Aorta (tissue), 5 donors: ENCODE measurements at regions of chr9 and their contacts with region 1.

Region 1: DNA sequence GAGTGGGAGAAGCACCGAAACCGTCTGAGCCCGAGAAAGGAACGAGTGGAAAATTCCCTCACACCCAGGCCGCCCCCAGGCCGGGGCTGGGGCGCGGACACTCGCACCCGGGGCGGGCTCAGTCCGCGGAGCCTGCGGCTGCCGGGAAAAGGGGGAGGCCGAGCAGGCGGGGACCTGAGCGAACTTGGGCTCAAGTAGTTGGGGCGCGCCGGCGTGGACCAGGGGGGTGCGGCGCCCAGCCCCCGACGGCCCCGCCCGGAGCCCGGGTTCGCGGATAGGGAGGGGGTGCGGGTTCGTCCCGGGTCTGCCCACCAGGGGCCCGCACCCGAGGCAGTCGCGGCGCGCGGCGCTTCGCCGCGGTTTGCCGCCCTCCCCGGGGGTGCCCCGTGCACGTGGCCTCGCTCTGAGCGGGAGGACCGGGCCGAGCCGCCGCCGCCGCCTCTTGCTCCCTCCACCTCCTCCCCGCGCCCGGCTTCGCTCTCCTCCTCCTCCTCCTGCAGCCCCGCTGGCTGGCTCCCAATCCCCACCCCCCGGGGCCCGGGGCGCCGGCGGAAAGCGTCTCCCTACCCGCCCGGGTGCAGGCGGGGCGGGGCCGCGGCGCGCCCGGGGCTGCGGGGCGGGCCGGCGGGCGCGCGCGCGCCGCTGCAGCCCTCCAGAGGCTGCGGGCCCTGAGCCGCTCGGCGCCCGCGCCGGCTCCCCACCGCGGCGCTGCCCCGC is 1.1 kb upstream of the NFIB start:
- DNase-seq: peak; percentile 95 to 98
- ATAC-seq: peak; percentile 84
- H3K4me3 ChIP-seq: peak overlapping the region; percentile 39 to 92
- H3K27ac ChIP-seq: peak overlapping the region; percentile 96 to 97
- H3K4me1 ChIP-seq: no peaks in the 10 kb centered on the region
- H3K27me3 ChIP-seq: no peaks in the 10 kb centered on the region

Region 2: DNA sequence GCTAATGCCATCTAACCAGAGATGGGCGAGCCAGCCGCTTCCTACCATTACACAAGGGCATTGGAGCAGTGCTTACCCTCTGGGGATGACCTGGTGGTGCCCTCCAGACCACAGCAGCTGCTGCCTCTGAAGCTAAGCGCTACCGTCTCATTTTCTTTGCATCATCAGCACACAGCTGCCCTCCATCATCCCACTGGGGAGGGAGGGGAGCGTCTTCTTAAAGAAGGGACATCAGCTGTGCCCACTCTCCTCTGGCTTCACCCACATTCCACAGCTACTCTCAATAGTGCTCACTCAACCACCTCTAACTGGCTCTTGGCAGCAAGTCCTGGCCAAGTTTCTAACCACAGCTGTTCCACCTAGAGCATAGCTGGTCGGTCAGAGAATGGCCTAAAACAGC is 504.6 kb before region 1 on chr9:
- intact Hi-C with region 1: no loop called
- DNase-seq: no peak
- ATAC-seq: no peak
- H3K4me3 ChIP-seq: no peak overlapping the region
- H3K27ac ChIP-seq: no peak overlapping the region
- H3K4me1 ChIP-seq: no peaks in the 10 kb centered on the region
- H3K27me3 ChIP-seq: no peaks in the 10 kb centered on the region

Region 3: GRCh38 chr9:14030375-14031059 is 284.6 kb before region 1 on chr9:
- intact Hi-C with region 1: loop called in 1 of 2 experiments (anchors 10 kb)
- DNase-seq: no peak
- ATAC-seq: peak; percentile 72
- H3K4me3 ChIP-seq: peak overlapping the region in 1 of 2 donors; percentile 64
- H3K27ac ChIP-seq: peak overlapping the region; percentile 92 to 100
- H3K4me1 ChIP-seq: peaks cover 7 to 10% of the 10 kb centered on the region in 2 donors
- H3K27me3 ChIP-seq: no peaks in the 10 kb centered on the region

Region 4: DNA sequence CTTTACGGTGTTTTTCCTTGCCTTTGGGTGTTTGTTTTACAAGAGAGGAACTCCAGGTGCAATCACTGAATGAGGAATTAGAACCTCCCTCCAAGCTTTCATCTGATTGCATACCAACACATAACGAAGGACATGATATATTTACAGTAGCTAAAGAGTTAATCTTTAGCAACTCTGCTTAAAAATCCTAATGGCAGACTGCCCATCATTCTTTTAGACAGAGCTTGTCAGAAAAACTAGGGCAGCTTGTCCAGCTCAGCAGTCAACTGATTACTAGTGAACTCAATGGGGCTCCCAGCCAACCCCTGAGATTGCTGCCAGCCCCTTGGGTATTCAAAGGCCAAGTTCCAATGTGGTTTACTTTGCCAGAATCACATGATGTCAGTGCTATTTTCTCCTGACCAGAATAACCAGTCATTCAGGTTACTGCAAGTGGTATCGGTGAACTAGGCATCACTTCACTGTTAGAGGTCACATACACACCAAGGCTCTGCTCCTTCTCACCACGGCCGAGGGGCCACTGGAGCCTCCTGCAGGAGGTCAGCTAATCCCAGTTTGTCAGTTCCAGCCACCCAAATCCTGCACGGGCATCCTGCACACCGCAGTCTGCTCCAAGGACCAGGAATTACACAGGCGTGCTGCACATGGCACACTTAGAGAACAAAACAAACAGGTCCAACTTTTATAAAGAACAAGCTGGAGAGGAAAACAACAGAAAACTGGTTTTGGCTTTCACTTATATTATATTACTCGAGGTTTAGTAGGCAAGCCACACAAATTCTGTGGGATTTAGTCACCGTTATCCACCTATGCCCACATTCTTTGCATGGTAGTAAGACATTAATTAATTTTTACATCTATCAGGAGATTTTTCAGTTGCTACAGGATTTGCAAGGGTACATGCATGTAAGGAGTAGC is 63.7 kb before region 1 on chr9:
- intact Hi-C with region 1: loop called in 1 of 2 experiments (anchors 10 kb)
- DNase-seq: peak; percentile 79 to 86
- ATAC-seq: peak; percentile 74
- H3K4me3 ChIP-seq: no peak overlapping the region
- H3K27ac ChIP-seq: peak overlapping the region in 1 of 2 donors; percentile 96
- H3K4me1 ChIP-seq: peaks cover 3 to 16% of the 10 kb centered on the region in 2 donors
- H3K27me3 ChIP-seq: no peaks in the 10 kb centered on the region

Region 5: DNA sequence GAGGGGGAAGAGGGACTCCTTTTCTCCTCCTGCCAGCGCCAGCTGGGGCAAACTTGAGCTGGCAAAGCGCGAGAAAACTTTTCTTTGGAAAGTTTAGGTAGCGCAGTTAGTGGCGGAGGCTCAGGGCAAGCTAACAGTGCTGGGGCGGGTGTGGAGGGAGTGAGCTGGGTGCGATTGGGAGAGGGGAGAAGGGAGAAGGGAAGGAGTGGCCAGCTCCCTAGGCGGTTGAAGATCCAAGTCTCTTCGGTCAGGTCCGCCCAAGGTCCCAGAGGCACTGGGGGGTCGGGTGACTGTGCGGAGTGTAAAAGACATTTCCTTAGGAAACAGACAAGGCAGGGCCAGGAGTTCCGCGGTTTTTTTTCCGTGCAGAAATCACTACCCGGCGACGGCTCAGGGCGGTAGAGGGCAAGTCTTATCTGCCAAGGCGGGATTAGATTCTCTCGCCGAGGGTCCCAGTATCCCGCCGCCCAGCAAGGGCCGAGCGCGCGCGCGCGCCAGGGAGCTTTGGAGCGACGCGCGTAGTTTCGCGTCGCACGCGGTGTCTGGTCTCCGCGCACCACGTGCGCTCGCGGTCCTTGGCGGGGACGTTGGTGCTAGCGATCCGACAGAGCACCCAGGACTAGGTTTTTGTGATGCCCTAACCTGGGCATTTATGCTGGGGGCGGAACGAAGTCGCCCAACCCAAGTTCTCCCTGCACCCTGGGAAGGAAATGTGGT is 32.5 kb after region 1 on chr9:
- intact Hi-C with region 1: loop called in 1 of 2 experiments (anchors 5 kb)
- DNase-seq: peak; percentile 66 to 82
- ATAC-seq: peak; percentile 61
- H3K4me3 ChIP-seq: peak overlapping the region; percentile 64 to 87
- H3K27ac ChIP-seq: peak overlapping the region; percentile 80 to 87
- H3K4me1 ChIP-seq: peaks cover 2 to 4% of the 10 kb centered on the region in 2 donors
- H3K27me3 ChIP-seq: no peaks in the 10 kb centered on the region